Activated T-helper 1 cell treated with anti-CD3 and anti-CD28 coated beads, Interleukin-12 subunit alpha, Interleukin-12 subunit beta, Interleukin-2, Interleukin-4 antibody, amounts not matched to agents 30 ng/mL and 10 ng/mL and 1 ng/mL, durations not matched to agents 14 hours and 24 hours and 36 hours (primary cell): ENCODE measurements at regions of chr14 and their contacts with region 1.

Region 1: GRCh38 chr14:65704850-65705249 is 292.3 kb downstream of the FUT8 start:
- DNase-seq: no peak
- H3K4me3 Mint-ChIP-seq: no peak overlapping the region
- H3K27ac Mint-ChIP-seq: peak overlapping the region; percentile 85
- H3K4me1 Mint-ChIP-seq: no peaks in the 10 kb centered on the region
- H3K27me3 Mint-ChIP-seq: no peaks in the 10 kb centered on the region

Region 2: DNA sequence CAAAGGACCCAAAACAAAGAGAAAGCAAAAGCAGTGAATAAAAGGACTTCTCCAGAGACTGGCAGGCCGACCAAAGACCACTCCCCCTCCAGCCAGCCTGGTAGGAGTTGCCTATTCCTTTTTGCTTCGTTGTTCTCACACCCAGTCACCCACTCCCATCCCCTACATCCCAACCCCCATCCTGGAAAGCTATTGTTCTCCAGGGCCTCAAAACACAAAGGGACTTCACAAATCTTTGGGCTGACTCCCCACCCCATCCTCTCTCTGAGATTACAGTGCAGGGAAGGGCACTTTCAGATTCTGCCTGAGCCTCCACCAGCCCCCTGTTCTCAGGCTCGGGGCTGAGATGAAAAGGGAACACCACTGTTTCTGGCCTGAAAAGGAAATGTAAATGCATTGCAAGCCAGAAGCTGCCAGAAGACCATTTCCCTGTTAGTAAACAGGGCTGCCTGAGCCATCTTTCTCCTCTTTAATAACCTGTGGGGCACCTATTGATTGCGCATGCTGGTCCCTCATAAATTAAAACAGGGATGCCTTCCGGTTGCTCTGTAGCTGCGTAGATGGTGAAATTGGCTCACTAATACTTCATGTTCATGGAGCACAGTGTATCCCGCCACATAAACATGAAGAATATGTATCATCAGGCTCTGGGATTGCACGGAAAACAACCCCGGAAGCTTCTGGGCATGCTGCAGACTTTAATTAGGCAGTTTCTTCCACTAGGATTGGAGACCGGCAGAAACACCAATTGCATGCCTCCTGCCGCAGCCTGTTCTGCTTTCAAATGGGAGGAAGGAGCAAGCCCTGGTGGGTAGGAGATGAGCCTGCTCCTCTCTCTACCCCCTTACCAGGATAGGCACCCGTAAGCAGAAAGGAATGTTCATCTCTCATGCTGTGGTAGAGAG is 422.6 kb before region 1 on chr14:
- intact Hi-C with region 1: loop called (anchors 10 kb)
- DNase-seq: peak; percentile 21
- H3K4me3 Mint-ChIP-seq: peak overlapping the region; percentile 69
- H3K27ac Mint-ChIP-seq: peak overlapping the region; percentile 59
- H3K4me1 Mint-ChIP-seq: peaks cover 47% of the 10 kb centered on the region
- H3K27me3 Mint-ChIP-seq: no peaks in the 10 kb centered on the region

Region 3: GRCh38 chr14:65723348-65723747 is 18.5 kb after region 1 on chr14:
- intact Hi-C with region 1: loop called (anchors 2 kb)
- DNase-seq: no peak
- H3K4me3 Mint-ChIP-seq: peak overlapping the region; percentile 32
- H3K27ac Mint-ChIP-seq: peak overlapping the region; percentile 5
- H3K4me1 Mint-ChIP-seq: peaks cover 43% of the 10 kb centered on the region
- H3K27me3 Mint-ChIP-seq: no peaks in the 10 kb centered on the region

Region 4: DNA sequence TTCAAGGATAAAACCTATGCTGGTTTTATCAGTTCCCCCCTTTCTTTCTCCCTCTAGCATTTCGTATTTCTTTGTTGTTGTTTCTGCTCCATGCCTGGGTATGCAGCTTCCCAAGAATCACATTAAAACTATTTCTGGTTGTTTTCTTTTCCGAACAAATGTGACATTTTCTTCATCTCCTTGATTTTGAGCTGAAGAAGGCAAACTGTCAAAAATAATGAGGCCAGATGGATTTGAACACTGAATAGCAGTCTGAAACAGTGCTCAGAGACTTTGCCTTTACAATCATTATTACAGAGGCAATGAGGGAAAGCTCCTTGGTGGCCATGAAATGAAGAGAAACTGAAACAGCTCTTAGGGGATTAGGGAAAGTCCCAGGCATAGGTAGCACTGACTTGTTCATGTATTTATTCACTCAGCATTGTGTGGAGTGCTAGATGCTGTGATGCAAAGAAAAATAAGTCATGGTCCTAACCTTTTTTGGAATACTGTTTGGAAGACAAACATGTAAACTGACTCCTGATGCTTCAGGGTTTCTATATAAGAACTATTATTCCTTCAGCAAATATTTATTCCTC is 27.2 kb after region 1 on chr14:
- intact Hi-C with region 1: loop called (anchors 1 kb)
- DNase-seq: peak; percentile 20
- H3K4me3 Mint-ChIP-seq: peak overlapping the region; percentile 47
- H3K27ac Mint-ChIP-seq: peak overlapping the region; percentile 64
- H3K4me1 Mint-ChIP-seq: peaks cover 16% of the 10 kb centered on the region
- H3K27me3 Mint-ChIP-seq: no peaks in the 10 kb centered on the region